MCF 10A (cell line): ENCODE measurements at regions of chr10 and their contacts with region 1.

Region 1: GRCh38 chr10:112471878-112472487 is 25.0 kb downstream of the VTI1A start:
- DNase-seq: peak; percentile 64
- H3K4me3 Mint-ChIP-seq: no peak overlapping the region
- H3K27ac Mint-ChIP-seq: no peak overlapping the region
- H3K4me1 Mint-ChIP-seq: no peaks in the 10 kb centered on the region
- H3K27me3 Mint-ChIP-seq: no peaks in the 10 kb centered on the region
- CTCF ChIP-seq: peak; percentile 56

Region 2: GRCh38 chr10:112446855-112447711 is 24.9 kb before region 1 on chr10 and contains the starts of genes VTI1A and ZDHHC6:
- CTCF ChIA-PET with region 1: interaction called, 10 read pairs
- POLR2A ChIA-PET with region 1: interaction called, 5 read pairs
- intact Hi-C with region 1: loop called (anchors 1 kb)
- DNase-seq: peak; percentile 85
- H3K4me3 Mint-ChIP-seq: peak within 1 kb of the TSS; percentile 95
- H3K27ac Mint-ChIP-seq: peak within 1 kb of the TSS; percentile 88
- H3K4me1 Mint-ChIP-seq: peaks cover 16% of the 10 kb centered on the region
- H3K27me3 Mint-ChIP-seq: no peaks in the 10 kb centered on the region
- CTCF ChIP-seq: no peak
- total RNA-seq, gene VTI1A: 44.4 and 58.1 TPM in 2 replicates
- total RNA-seq, gene ZDHHC6: 25.9 and 26.3 TPM in 2 replicates

Region 3: DNA sequence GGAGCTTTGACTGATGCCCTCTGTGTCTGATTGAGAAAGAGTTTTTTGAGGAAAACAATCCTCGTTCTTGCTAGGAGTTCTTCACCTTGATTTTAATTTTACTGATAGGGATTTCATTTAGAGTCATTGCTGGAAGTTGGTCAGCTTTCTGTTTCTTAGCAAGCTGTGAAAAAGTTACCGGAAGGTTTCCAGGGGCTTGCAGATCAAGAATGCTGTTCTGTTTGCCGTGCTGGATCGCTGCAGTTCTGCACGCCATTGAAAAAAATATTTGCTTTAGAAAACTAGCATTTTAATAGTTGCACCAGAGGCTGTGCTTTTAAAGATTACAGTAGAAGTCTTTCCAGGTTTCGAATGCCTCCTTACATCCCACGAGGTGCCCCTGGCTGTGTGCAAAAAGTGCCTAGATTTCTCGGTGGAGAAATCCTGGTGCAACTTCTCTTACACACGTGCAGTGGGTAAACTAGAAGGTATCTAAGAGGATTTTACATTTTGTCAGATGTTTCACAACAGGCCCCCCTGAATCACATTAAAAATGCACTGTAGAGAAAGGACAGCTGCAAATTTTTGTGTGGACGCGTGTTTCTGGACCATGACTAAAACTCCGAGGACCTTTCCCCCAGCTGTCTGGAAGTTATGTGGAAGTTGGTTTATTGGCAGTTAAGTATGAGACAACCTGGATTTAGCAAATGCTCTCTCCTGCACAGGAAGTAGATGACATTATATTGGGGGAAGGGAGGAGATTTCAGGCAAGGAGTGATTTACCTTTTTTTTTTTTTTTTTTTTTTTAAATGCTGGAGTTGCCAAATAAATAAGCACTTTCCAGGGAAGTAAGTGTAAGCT is 483.8 kb after region 1 on chr10:
- CTCF ChIA-PET with region 1: no interaction called
- POLR2A ChIA-PET with region 1: interaction called, 3 read pairs
- intact Hi-C with region 1: loop called (anchors 5 kb)
- DNase-seq: peak; percentile 56
- H3K4me3 Mint-ChIP-seq: peak overlapping the region; percentile 76
- H3K27ac Mint-ChIP-seq: peak overlapping the region; percentile 87
- H3K4me1 Mint-ChIP-seq: peaks cover 67% of the 10 kb centered on the region
- H3K27me3 Mint-ChIP-seq: no peaks in the 10 kb centered on the region
- CTCF ChIP-seq: no peak

Region 4: GRCh38 chr10:113454341-113455061 is 982.5 kb after region 1 on chr10:
- CTCF ChIA-PET with region 1: interaction called, 11 read pairs
- POLR2A ChIA-PET with region 1: no interaction called
- intact Hi-C with region 1: loop called (anchors 2 kb)
- DNase-seq: peak; percentile 41
- H3K4me3 Mint-ChIP-seq: no peak overlapping the region
- H3K27ac Mint-ChIP-seq: no peak overlapping the region
- H3K4me1 Mint-ChIP-seq: no peaks in the 10 kb centered on the region
- H3K27me3 Mint-ChIP-seq: peaks cover 52% of the 10 kb centered on the region
- CTCF ChIP-seq: peak; percentile 70

Region 5: DNA sequence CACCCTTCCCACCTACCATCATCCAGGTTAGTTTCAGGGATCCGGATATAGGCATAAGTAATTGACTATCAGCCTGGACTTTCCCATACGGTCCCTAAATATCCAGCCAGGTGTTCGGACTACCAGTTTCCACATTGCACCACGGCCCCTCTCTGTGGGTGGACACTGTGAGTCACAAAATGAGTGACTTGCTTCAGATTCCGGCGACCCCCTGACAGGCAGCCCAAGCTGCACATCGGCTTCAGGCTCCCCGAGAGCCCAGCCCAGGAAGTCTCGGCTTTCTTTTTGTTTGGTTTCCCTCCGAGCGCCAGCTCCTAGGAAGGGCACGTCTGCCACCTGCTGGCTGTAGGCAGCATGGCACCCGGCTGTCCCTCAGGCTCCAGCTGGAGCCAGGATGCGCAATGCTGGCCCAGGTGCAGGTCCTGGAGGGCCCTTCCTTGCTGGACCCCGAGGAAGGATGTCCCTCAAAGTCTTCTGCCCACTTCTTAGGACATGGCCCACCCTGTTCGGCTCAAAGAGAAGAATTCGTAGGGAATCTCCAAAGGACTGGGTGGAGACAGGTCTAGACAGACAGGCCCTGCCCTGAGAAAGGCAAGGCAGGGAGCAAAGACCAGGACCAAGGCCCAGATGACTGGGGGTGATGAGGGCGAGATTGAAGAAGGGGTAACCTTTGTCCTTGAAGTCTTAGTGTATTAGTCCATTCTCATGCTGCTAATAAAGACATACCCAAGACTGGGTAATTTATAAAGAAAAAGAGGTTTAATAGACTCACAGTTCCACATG is 1091.5 kb after region 1 on chr10:
- CTCF ChIA-PET with region 1: interaction called, 15 read pairs
- POLR2A ChIA-PET with region 1: no interaction called
- intact Hi-C with region 1: loop called (anchors 1 kb)
- DNase-seq: peak; percentile 71
- H3K4me3 Mint-ChIP-seq: peak overlapping the region; percentile 70
- H3K27ac Mint-ChIP-seq: no peak overlapping the region
- H3K4me1 Mint-ChIP-seq: peaks cover 4% of the 10 kb centered on the region
- H3K27me3 Mint-ChIP-seq: peaks cover 12% of the 10 kb centered on the region
- CTCF ChIP-seq: peak; percentile 97